HepG2 (cell line): ENCODE measurements at regions of chr12 and their contacts with region 1.

Region 1: GRCh38 chr12:30806989-30807694 is 52.4 kb upstream of the CAPRIN2 start:
- DNase-seq: peak; percentile 54
- ATAC-seq: peak; percentile 96
- H3K4me3 ChIP-seq: no peak overlapping the region
- H3K27ac ChIP-seq: no peak overlapping the region
- H3K4me1 ChIP-seq: peaks cover 14% of the 10 kb centered on the region
- H3K27me3 ChIP-seq: no peaks in the 10 kb centered on the region
- CTCF ChIP-seq: peak; percentile 88
- EP300 ChIP-seq: no peak
- POLR2A ChIP-seq: no peak
- RAD21 ChIP-seq: peak; percentile 83

Region 2: GRCh38 chr12:30134229-30134628 is 672.9 kb before region 1 on chr12:
- CTCF ChIA-PET with region 1: no interaction called
- POLR2A ChIA-PET with region 1: no interaction called
- in situ Hi-C with region 1: loop called (anchors 25 kb)
- intact Hi-C with region 1: loop called (anchors 10 kb)
- DNase-seq: peak; percentile 24
- ATAC-seq: peak; percentile 89
- H3K4me3 ChIP-seq: no peak overlapping the region
- H3K27ac ChIP-seq: no peak overlapping the region
- H3K4me1 ChIP-seq: no peaks in the 10 kb centered on the region
- H3K27me3 ChIP-seq: no peaks in the 10 kb centered on the region
- CTCF ChIP-seq: peak; percentile 59
- EP300 ChIP-seq: no peak
- POLR2A ChIP-seq: no peak
- RAD21 ChIP-seq: no peak

Region 3: DNA sequence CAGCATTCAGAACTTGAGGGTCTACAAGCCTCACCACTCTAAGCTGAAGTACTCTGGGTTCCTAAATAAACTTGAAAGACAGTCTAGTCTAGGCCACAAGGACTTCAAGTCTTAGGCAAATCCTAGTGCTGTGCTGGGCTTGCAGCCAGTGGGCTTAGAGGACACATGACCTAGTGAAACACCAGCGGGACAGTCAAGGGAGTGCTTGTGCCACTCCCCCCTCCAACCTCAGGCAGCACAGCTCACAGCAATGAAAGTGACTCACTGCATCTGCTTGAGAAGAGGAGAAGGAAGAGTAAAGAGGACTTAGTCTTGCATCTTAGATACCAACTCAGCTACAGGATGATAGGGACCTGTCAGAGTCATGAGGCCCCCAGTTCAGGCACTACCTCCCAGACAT is 549.5 kb before region 1 on chr12:
- CTCF ChIA-PET with region 1: no interaction called
- POLR2A ChIA-PET with region 1: no interaction called
- in situ Hi-C with region 1: no loop called
- intact Hi-C with region 1: no loop called
- DNase-seq: no peak
- ATAC-seq: no peak
- H3K4me3 ChIP-seq: no peak overlapping the region
- H3K27ac ChIP-seq: no peak overlapping the region
- H3K4me1 ChIP-seq: no peaks in the 10 kb centered on the region
- H3K27me3 ChIP-seq: no peaks in the 10 kb centered on the region
- CTCF ChIP-seq: no peak
- EP300 ChIP-seq: no peak
- POLR2A ChIP-seq: no peak
- RAD21 ChIP-seq: no peak

Region 4: GRCh38 chr12:30323008-30323407 is 484.1 kb before region 1 on chr12:
- CTCF ChIA-PET with region 1: no interaction called
- POLR2A ChIA-PET with region 1: no interaction called
- in situ Hi-C with region 1: loop called (anchors 25 kb)
- intact Hi-C with region 1: no loop called
- DNase-seq: no peak
- ATAC-seq: peak; percentile 60; the same call in 2 of the 3 replicates
- H3K4me3 ChIP-seq: no peak overlapping the region
- H3K27ac ChIP-seq: no peak overlapping the region
- H3K4me1 ChIP-seq: no peaks in the 10 kb centered on the region
- H3K27me3 ChIP-seq: peaks cover 0 to 4% of the 10 kb centered on the region in 2 experiments; a peak in 1 of 5 replicates
- CTCF ChIP-seq: peak; percentile 53
- EP300 ChIP-seq: no peak
- POLR2A ChIP-seq: no peak
- RAD21 ChIP-seq: no peak

Region 5: GRCh38 chr12:30440826-30441602 is 366.1 kb before region 1 on chr12:
- CTCF ChIA-PET with region 1: no interaction called
- POLR2A ChIA-PET with region 1: no interaction called
- in situ Hi-C with region 1: no loop called
- intact Hi-C with region 1: loop called (anchors 1 kb)
- DNase-seq: peak; percentile 52
- ATAC-seq: peak; percentile 99
- H3K4me3 ChIP-seq: no peak overlapping the region
- H3K27ac ChIP-seq: no peak overlapping the region
- H3K4me1 ChIP-seq: peaks cover 30% of the 10 kb centered on the region
- H3K27me3 ChIP-seq: no peaks in the 10 kb centered on the region
- CTCF ChIP-seq: peak; percentile 54
- EP300 ChIP-seq: no peak
- POLR2A ChIP-seq: no peak
- RAD21 ChIP-seq: peak; percentile 18; the same call in 1 of the 2 replicates